Panc1 (cell line): ENCODE measurements at regions of chr7 and their contacts with region 1.

Region 1: GRCh38 chr7:121440857-121441503 is 44.9 kb upstream of the FAM3C start:
- DNase-seq: no peak
- ATAC-seq: peak; percentile 70
- H3K4me3 ChIP-seq: peak overlapping the region; percentile 34 to 49
- H3K27ac ChIP-seq: peak overlapping the region; percentile 76
- H3K4me1 ChIP-seq: peaks cover 10% of the 10 kb centered on the region; the same call in 1 of the 2 replicates
- H3K27me3 ChIP-seq: no peaks in the 10 kb centered on the region
- CTCF ChIP-seq: no peak

Region 2: DNA sequence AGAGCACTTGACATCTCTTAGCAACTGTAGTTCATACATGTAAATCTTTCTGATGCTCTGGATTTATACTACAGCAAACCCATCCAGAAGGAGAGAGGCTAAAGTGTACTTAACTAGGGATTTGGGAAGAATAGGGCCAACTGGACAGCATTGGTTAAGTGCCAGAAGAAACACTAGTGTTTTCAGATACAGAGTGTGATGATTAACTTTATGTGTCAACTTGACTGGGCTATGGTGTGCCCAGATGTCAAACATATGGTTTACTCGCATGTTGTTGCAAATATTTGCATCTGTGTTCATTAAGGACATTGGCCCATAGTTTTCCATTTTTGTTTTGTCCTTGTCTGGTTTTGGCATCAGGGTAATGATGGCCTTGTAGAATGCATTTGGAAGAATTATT is 1552.7 kb before region 1 on chr7:
- CTCF ChIA-PET with region 1: no interaction called
- POLR2A ChIA-PET with region 1: no interaction called
- in situ Hi-C with region 1: no loop called
- intact Hi-C with region 1: no loop called
- DNase-seq: no peak
- ATAC-seq: no peak
- H3K4me3 ChIP-seq: no peak overlapping the region
- H3K27ac ChIP-seq: no peak overlapping the region
- H3K4me1 ChIP-seq: no peaks in the 10 kb centered on the region
- H3K27me3 ChIP-seq: no peaks in the 10 kb centered on the region
- CTCF ChIP-seq: no peak

Region 3: DNA sequence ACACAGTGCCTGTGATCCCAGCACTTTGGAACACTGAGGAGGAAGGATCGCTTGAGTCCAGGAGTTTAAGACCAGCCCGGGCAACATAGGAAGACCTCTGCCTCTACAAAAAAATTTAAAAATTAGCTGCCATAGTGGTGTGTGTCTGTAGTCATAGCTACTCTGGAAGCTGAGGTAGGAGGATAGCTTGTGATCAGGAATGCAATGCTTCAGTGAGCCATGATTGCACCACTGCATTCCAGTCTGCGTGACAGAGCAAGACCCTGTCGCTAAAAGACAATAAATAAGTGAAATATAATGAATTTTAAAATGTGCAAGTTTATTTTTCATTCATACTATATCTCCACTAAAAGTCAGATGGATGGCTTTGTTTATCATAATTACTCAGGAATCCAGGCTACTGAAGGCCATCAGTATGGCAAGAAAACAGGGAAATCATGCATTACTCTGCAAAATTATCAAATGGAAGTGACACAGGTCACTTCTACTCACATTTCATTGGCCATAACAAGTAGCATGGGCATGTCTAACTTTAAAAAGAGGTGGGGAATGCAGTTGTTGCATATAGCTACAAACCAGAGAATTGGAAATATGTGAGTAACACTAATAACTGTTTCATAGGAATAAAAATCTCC is 12.0 kb before region 1 on chr7:
- CTCF ChIA-PET with region 1: interaction called, 10 read pairs
- POLR2A ChIA-PET with region 1: no interaction called
- in situ Hi-C with region 1: no loop called
- intact Hi-C with region 1: no loop called
- DNase-seq: no peak
- ATAC-seq: no peak
- H3K4me3 ChIP-seq: no peak overlapping the region
- H3K27ac ChIP-seq: no peak overlapping the region
- H3K4me1 ChIP-seq: no peaks in the 10 kb centered on the region
- H3K27me3 ChIP-seq: no peaks in the 10 kb centered on the region
- CTCF ChIP-seq: no peak

Region 4: GRCh38 chr7:121936951-121937623 is 496.1 kb after region 1 on chr7:
- CTCF ChIA-PET with region 1: no interaction called
- POLR2A ChIA-PET with region 1: no interaction called
- in situ Hi-C with region 1: no loop called
- intact Hi-C with region 1: no loop called
- DNase-seq: no peak
- ATAC-seq: no peak
- H3K4me3 ChIP-seq: no peak overlapping the region
- H3K27ac ChIP-seq: no peak overlapping the region
- H3K4me1 ChIP-seq: no peaks in the 10 kb centered on the region
- H3K27me3 ChIP-seq: no peaks in the 10 kb centered on the region
- CTCF ChIP-seq: no peak